GM12878 (cell line): ENCODE measurements at regions of chr7 and their contacts with region 1.

Region 1: GRCh38 chr7:43729214-43729923 is at the start of gene COA1:
- DNase-seq: peak; percentile 68
- ATAC-seq: peak; percentile 85
- H3K4me3 ChIP-seq: peak within 1 kb of the TSS; percentile 79
- H3K27ac ChIP-seq: peak within 1 kb of the TSS; percentile 74
- H3K4me1 ChIP-seq: peaks cover 13% of the 10 kb centered on the region
- H3K27me3 ChIP-seq: no peaks in the 10 kb centered on the region
- CTCF ChIP-seq: peak in 2 of 3 experiments; percentile 8 to 24; a peak in 1 of 6 replicates
- EP300 ChIP-seq: no peak
- POLR2A ChIP-seq: peak; percentile 86
- RAD21 ChIP-seq: no peak
- polyA plus RNA-seq, gene COA1: 218 to 258 TPM

Region 2: DNA sequence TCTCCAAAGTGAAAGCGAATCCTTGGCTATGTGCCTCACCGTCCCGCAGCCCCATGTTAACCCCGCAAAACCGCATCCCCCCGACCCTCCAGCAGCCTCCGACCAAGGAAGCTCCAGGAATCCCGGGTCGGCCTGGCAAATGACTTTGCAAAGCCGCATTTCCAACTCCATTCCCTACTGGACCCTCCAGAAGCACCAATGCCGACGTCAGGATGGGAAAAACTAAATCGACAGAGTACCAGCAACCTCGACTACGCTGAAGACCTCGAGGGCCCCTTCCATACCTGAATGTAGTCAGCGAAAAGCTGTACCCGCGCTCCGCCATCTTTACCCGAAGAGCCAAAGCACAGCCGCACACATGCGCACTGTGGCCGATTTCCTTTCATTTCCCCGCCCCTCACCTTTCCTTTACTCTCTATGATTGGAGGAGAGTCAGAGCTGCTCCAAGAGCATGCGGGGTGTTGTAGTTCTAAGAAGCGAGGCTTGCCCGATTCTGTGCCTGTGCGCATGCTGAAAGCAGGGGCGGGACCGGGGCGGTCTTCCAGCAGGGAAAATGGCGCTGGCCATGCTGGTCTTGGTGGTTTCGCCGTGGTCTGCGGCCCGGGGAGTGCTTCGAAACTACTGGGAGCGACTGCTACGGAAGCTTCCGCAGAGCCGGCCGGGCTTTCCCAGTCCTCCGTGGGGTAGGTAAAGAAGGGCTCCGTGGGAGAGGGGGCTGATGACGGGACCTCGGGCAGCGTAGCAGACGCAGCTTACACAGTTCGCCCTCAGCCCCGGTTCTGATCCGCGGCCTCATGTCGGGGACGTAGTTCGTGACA is 797.3 kb before region 1 on chr7 and contains the starts of genes MRPL32 and PSMA2:
- CTCF ChIA-PET with region 1: interaction called, 3 read pairs
- POLR2A ChIA-PET with region 1: no interaction called
- RAD21 ChIA-PET with region 1: no interaction called
- SMC1A ChIA-PET with region 1: no interaction called
- in situ Hi-C with region 1: loop called (anchors 10 kb)
- intact Hi-C with region 1: loop called (anchors 10 kb)
- DNase-seq: peak; percentile 95
- ATAC-seq: peak; percentile 97
- H3K4me3 ChIP-seq: peak within 1 kb of the TSS; percentile 94
- H3K27ac ChIP-seq: peak within 1 kb of the TSS; percentile 86
- H3K4me1 ChIP-seq: peaks cover 15% of the 10 kb centered on the region; the same call in 1 of the 2 replicates
- H3K27me3 ChIP-seq: no peaks in the 10 kb centered on the region
- CTCF ChIP-seq: no peak
- EP300 ChIP-seq: no peak
- POLR2A ChIP-seq: peak; percentile 96
- RAD21 ChIP-seq: no peak
- polyA plus RNA-seq, gene MRPL32: 274 to 339 TPM
- polyA plus RNA-seq, gene PSMA2: 1,068 to 1,223 TPM

Region 3: GRCh38 chr7:43308913-43309705 is 420.3 kb before region 1 on chr7:
- CTCF ChIA-PET with region 1: interaction called, 3 read pairs
- POLR2A ChIA-PET with region 1: no interaction called
- RAD21 ChIA-PET with region 1: no interaction called
- SMC1A ChIA-PET with region 1: interaction called, 3 read pairs
- in situ Hi-C with region 1: no loop called
- intact Hi-C with region 1: loop called (anchors 5 kb)
- DNase-seq: peak; percentile 71
- ATAC-seq: peak; percentile 88
- H3K4me3 ChIP-seq: no peak overlapping the region
- H3K27ac ChIP-seq: peak overlapping the region; percentile 41
- H3K4me1 ChIP-seq: peaks cover 8% of the 10 kb centered on the region
- H3K27me3 ChIP-seq: no peaks in the 10 kb centered on the region
- CTCF ChIP-seq: no peak
- EP300 ChIP-seq: peak; percentile 91 to 99; a peak in 3 of 4 replicates
- POLR2A ChIP-seq: no peak
- RAD21 ChIP-seq: no peak

Region 4: DNA sequence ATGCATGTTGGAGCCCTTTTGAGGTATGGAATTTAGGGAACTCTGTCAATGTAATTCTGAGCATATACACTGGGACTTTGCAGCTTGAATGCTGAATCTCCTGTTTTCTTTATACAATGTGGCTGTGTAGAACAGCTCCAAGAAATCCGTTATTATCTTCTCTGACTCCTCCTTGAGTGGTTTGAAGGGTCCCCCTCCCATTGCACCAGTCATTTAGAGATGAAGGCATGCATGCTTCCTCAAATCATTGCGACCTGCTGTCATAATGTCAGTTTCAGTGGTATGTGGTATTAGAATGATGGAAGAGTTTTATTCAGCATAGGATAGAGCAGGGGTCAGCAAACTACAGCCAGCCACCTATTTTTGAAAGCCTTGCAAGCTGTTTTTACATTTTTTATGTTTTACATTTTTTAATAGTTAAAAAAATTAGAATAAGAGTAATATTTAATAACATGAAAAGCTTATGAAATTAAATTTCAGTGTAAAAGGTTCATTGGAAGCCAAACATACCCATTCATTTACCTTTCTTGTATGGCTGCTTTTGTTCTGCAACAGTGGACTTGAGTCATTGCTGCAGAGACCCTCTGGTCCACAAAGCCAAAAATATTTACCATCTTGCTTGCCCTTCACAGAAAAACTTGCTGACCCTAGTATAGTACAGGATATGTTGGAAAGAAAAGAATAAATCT is 138.4 kb before region 1 on chr7:
- CTCF ChIA-PET with region 1: interaction called, 3 read pairs
- POLR2A ChIA-PET with region 1: interaction called, 7 read pairs
- RAD21 ChIA-PET with region 1: interaction called, 150 read pairs
- SMC1A ChIA-PET with region 1: interaction called, 93 read pairs
- in situ Hi-C with region 1: no loop called
- intact Hi-C with region 1: no loop called
- DNase-seq: peak; percentile 87
- ATAC-seq: peak; percentile 65
- H3K4me3 ChIP-seq: peak overlapping the region; percentile 71
- H3K27ac ChIP-seq: peak overlapping the region; percentile 98
- H3K4me1 ChIP-seq: peaks cover 42% of the 10 kb centered on the region
- H3K27me3 ChIP-seq: no peaks in the 10 kb centered on the region
- CTCF ChIP-seq: no peak
- EP300 ChIP-seq: peak; percentile 87 to 99
- POLR2A ChIP-seq: no peak; the same call in 1 of the 2 replicates
- RAD21 ChIP-seq: 0 out of 2 replicates have a peak, but pooled peaks have one; percentile 13

Region 5: DNA sequence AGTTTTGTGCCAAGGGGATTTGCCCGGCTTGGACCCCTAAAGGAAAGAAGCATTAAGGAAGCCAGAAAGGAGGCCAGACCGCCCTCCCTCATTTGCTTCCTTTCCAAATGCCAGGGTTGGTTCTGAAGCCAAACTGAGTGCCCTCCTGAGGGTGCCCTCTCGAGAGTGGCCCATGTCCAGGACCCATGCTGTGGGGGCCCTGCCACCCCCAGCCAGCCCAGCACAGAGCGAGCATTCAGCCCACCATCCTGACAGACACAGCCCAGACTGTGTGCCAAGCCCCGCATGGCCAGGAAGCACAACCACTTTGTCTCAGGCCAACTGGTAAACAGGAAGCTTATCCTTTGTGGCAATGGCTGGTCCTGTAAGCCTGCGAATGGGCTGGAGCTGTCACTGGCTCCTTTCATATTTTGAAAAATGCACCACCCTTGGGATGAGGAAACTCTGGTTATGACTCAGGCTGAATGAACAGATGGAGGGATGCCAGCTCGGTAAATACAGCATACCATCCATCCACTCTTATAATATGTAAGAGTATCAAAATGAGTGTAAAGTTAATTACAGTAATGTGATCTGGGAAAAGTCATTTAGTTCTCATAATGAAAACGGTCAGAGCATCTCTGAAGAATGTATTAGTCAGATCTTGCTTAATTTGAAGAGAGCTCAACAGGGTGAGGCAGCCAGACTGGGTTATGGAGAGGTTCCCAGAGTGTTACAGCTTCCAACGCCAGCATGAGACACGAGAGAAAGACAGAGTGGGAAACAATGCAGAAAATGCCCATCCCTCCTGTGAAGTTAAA is 81.5 kb before region 1 on chr7:
- CTCF ChIA-PET with region 1: no interaction called
- POLR2A ChIA-PET with region 1: no interaction called
- RAD21 ChIA-PET with region 1: interaction called, 22 read pairs
- SMC1A ChIA-PET with region 1: interaction called, 17 read pairs
- in situ Hi-C with region 1: no loop called
- intact Hi-C with region 1: no loop called
- DNase-seq: peak; percentile 85
- ATAC-seq: peak; percentile 55
- H3K4me3 ChIP-seq: peak overlapping the region; percentile 58
- H3K27ac ChIP-seq: peak overlapping the region; percentile 99
- H3K4me1 ChIP-seq: peaks cover 68% of the 10 kb centered on the region
- H3K27me3 ChIP-seq: no peaks in the 10 kb centered on the region
- CTCF ChIP-seq: no peak
- EP300 ChIP-seq: peak in 1 of 2 experiments; percentile 40; a peak in 2 of 4 replicates
- POLR2A ChIP-seq: peak; percentile 48
- RAD21 ChIP-seq: no peak

Region 6: GRCh38 chr7:43764039-43764761 is 34.8 kb after region 1 on chr7:
- CTCF ChIA-PET with region 1: interaction called, 16 read pairs
- POLR2A ChIA-PET with region 1: interaction called, 19 read pairs
- RAD21 ChIA-PET with region 1: interaction called, 49 read pairs
- SMC1A ChIA-PET with region 1: interaction called, 84 read pairs
- in situ Hi-C with region 1: no loop called
- intact Hi-C with region 1: loop called (anchors 5 kb)
- DNase-seq: no peak
- ATAC-seq: peak; percentile 86
- H3K4me3 ChIP-seq: peak overlapping the region; percentile 77
- H3K27ac ChIP-seq: peak overlapping the region; percentile 76
- H3K4me1 ChIP-seq: peaks cover 29% of the 10 kb centered on the region
- H3K27me3 ChIP-seq: no peaks in the 10 kb centered on the region
- CTCF ChIP-seq: no peak
- EP300 ChIP-seq: no peak
- POLR2A ChIP-seq: peak; percentile 29; the same call in 1 of the 2 replicates
- RAD21 ChIP-seq: no peak

Region 7: GRCh38 chr7:43784030-43785001 is 54.9 kb after region 1 on chr7:
- CTCF ChIA-PET with region 1: interaction called, 5 read pairs
- POLR2A ChIA-PET with region 1: interaction called, 7 read pairs
- RAD21 ChIA-PET with region 1: interaction called, 25 read pairs
- SMC1A ChIA-PET with region 1: interaction called, 37 read pairs
- in situ Hi-C with region 1: no loop called
- intact Hi-C with region 1: loop called (anchors 1 kb)
- DNase-seq: peak; percentile 82
- ATAC-seq: peak; percentile 97
- H3K4me3 ChIP-seq: peak overlapping the region; percentile 47
- H3K27ac ChIP-seq: peak overlapping the region; percentile 56
- H3K4me1 ChIP-seq: peaks cover 16% of the 10 kb centered on the region
- H3K27me3 ChIP-seq: no peaks in the 10 kb centered on the region
- CTCF ChIP-seq: no peak; a peak in 1 of 6 replicates
- EP300 ChIP-seq: no peak
- POLR2A ChIP-seq: no peak
- RAD21 ChIP-seq: no peak